CD14-positive monocyte (primary cell): ENCODE measurements at regions of chr1 and their contacts with region 1.

Region 1: GRCh38 chr1:66563094-66563800 is 29.3 kb downstream of the SGIP1 start:
- DNase-seq: peak in 1 of 3 donors; percentile 20
- H3K4me3 ChIP-seq: no peak overlapping the region
- H3K4me3 Mint-ChIP-seq: no peak overlapping the region
- H3K27ac ChIP-seq: no peak overlapping the region
- H3K27ac Mint-ChIP-seq: peak overlapping the region in 6 of 7 donors; percentile 67 to 98 (median 94)
- H3K4me1 ChIP-seq: peaks cover 12 to 20% of the 10 kb centered on the region in 2 donors
- H3K4me1 Mint-ChIP-seq: peaks cover 20% of the 10 kb centered on the region
- H3K27me3 ChIP-seq: no peaks in the 10 kb centered on the region
- H3K27me3 Mint-ChIP-seq: peaks cover 0 to 1% (median 1%) of the 10 kb centered on the region in 3 donors
- CTCF ChIP-seq: no peak

Region 2: DNA sequence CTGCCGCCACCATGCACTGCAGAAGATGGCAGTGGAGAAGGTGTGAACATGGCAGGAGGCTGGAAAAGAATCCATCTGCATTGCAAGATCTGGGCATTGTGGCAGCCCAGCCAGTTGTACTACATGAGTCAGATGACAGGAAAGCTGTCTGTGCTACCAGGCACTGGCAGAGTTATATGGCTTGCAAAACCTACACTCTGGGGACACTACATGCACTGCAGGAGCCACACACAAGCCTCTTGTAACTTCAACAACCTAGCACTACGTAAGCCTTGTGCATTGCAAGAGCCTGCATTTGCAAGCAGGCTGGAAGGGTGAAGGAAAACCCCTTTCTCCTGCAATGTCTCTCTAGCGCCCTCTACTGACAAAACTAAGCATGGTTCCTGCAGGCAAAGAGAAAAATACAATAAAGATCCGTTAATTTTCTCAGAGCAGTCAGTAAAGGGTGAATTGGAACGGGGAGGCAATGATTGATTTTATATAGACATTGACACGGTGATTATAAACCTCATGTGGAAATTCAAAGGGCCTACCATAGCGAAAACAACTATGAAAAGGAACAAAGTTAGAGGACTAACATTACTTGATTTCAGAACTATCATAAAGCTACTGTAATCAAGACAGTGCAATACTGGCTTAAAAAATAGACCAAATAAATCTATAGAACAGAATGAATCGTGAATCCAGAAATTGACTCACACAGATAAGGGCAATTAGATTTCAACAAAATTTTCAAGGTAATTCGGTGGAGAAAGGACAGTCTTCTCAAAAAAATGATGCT is 162.8 kb after region 1 on chr1:
- intact Hi-C with region 1: loop called in 1 of 2 experiments (anchors 10 kb)
- DNase-seq: peak; percentile 59 to 83 (median 72)
- H3K4me3 ChIP-seq: no peak overlapping the region
- H3K4me3 Mint-ChIP-seq: no peak overlapping the region
- H3K27ac ChIP-seq: no peak overlapping the region
- H3K27ac Mint-ChIP-seq: peak overlapping the region in 4 of 7 donors; percentile 50 to 76 (median 58)
- H3K4me1 ChIP-seq: peaks cover 0 to 4% of the 10 kb centered on the region in 2 donors
- H3K4me1 Mint-ChIP-seq: peaks cover 13% of the 10 kb centered on the region
- H3K27me3 ChIP-seq: no peaks in the 10 kb centered on the region
- H3K27me3 Mint-ChIP-seq: peaks cover 0 to 4% (median 2%) of the 10 kb centered on the region in 3 donors
- CTCF ChIP-seq: peak; percentile 99